ENCODE measurements at regions of chr19 and their contacts with region 1.

Region 1: DNA sequence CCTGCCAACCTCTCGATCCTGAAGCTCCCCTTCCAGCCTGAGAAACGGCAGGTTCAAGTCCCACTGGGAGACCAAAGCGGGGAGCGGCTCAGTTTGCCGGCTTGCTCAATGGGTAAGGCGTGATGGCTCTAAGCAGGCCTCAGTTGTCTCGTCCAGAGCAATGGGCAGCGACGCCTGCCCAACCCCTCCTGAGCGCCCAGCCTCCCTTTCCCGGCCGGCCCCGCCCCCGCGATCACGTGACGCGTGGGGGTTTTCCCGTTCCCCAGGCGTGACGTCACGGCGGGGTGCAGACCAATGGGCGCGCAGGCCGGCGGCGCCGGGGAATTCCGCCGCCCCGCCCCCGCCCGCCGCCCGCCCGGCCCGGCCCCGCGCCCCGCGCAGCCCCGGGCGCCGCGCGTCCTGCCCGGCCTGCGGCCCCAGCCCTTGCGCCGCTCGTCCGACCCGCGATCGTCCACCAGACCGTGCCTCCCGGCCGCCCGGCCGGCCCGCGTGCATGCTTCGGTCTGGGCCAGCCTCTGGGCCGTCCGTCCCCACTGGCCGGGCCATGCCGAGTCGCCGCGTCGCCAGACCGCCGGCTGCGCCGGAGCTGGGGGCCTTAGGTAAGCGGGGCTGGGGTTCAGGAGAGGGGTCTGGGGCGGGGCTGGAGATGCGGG is at the start of gene RELB:
- DNase-seq: peak; percentile 99
- H3K4me3 ChIP-seq: peak within 1 kb of the TSS; percentile 64 to 78
- H3K27ac ChIP-seq: peak within 1 kb of the TSS; percentile 69 to 98
- H3K4me1 ChIP-seq: peaks cover 0 to 5% of the 10 kb centered on the region in 2 experiments; a peak in 1 of 4 replicates
- H3K27me3 ChIP-seq: no peaks in the 10 kb centered on the region
- CTCF ChIP-seq: no peak
- EP300 ChIP-seq: no peak
- RAD21 ChIP-seq: no peak
- polyA plus RNA-seq, gene RELB: 9.5 and 12.6 TPM in 2 replicates

Region 2: GRCh38 chr19:44912854-44913253 is 88.4 kb before region 1 on chr19:
- CTCF ChIA-PET with region 1: no interaction called
- POLR2A ChIA-PET with region 1: no interaction called
- DNase-seq: no peak
- H3K4me3 ChIP-seq: no peak overlapping the region
- H3K27ac ChIP-seq: no peak overlapping the region
- H3K4me1 ChIP-seq: peaks cover 4% of the 10 kb centered on the region in 2 experiments; a peak in 1 of 4 replicates
- H3K27me3 ChIP-seq: no peaks in the 10 kb centered on the region
- CTCF ChIP-seq: no peak
- EP300 ChIP-seq: no peak
- RAD21 ChIP-seq: no peak

Region 3: GRCh38 chr19:44988896-44989556 is 12.2 kb before region 1 on chr19:
- CTCF ChIA-PET with region 1: interaction called, 21 read pairs
- POLR2A ChIA-PET with region 1: no interaction called
- DNase-seq: peak; percentile 87
- H3K4me3 ChIP-seq: no peak overlapping the region
- H3K27ac ChIP-seq: no peak overlapping the region
- H3K4me1 ChIP-seq: no peaks in the 10 kb centered on the region
- H3K27me3 ChIP-seq: no peaks in the 10 kb centered on the region
- CTCF ChIP-seq: peak; percentile 62
- EP300 ChIP-seq: no peak
- RAD21 ChIP-seq: peak; percentile 50

Region 4: GRCh38 chr19:45016388-45017319 is 15.4 kb after region 1 on chr19:
- CTCF ChIA-PET with region 1: interaction called, 13 read pairs
- POLR2A ChIA-PET with region 1: no interaction called
- DNase-seq: peak; percentile 88
- H3K4me3 ChIP-seq: no peak overlapping the region; a peak in 1 of 4 replicates
- H3K27ac ChIP-seq: no peak overlapping the region
- H3K4me1 ChIP-seq: no peaks in the 10 kb centered on the region
- H3K27me3 ChIP-seq: no peaks in the 10 kb centered on the region
- CTCF ChIP-seq: peak; percentile 81
- EP300 ChIP-seq: no peak
- RAD21 ChIP-seq: peak; percentile 83

Measured in SK-N-SH (cell line).